ENCODE measurements at regions of chr4 and their contacts with region 1.

Region 1: DNA sequence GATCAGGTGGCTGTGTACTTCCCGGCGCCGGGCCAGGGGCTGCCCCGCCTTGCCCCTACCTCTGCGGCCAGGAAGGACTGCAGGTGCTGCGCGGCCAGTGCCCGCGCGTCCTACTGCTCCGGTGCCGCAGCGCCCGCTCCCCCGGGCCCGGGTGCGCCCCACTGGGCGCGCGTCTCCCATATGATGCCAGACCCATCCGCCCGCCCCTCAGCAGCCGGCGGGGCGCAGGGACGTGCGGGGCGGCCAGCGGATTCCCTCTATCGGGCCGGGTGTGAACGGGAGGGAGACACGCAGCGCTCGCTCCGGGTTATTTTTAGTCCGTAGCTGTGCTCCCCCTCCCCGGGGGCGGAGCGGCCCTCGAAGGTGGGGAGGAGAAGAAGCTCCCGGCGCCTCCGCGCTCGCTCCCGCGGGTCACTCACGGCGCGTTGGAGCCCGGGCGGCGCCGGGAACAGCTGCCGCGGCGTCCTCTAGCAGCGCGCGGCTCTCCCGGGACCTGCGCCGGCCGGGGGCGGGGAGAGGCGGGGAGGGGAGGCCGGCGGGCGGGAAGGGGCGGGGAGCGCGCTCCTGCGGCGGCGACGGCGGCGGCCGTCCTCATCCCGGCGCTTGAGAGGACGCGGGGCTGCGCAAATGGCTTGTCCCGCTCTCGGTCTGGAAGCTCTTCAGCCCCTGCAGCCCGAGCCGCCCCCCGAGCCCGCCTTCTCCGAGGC is 103.6 kb downstream of the UCHL1 start:
- DNase-seq: no peak
- H3K4me3 ChIP-seq: peak overlapping the region; percentile 72 to 76
- H3K27ac ChIP-seq: peak overlapping the region; percentile 63
- H3K4me1 ChIP-seq: peaks cover 31% of the 10 kb centered on the region
- H3K27me3 ChIP-seq: no peaks in the 10 kb centered on the region
- CTCF ChIP-seq: no peak
- POLR2A ChIP-seq: no peak

Region 2: DNA sequence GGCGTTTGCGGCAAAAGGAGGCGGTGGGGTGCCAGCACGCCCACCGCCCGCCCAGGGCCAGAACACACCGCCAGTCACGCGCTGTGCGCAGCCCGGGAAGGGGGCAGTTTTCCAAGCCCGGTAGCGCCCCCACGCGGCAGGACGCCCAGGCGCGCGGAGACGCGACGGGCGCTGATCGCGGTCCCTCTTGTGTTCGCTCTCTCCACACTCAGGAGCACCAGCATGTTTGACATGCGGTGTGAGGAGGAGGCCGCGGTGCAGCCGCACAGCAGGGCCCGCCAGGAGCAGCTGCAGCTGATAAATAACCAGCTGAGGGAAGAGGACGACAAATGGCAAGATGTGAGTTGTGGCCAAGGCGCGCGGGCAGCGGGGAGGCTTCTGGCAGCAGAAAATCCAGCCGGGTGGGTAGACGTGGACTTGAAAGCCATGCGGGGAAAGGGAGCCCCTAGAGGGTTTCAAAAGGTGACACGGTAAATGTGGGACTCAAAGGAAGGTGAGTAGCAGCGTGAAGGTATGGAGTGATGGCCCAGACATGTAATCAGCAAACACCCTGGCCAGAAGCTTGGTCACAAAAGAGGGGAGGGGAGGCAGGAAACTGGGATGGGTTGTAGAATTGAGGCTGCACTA is 284.0 kb after region 1 on chr4:
- intact Hi-C with region 1: loop called (anchors 5 kb)
- DNase-seq: no peak
- H3K4me3 ChIP-seq: peak overlapping the region in 1 of 2 donors; percentile 17
- H3K27ac ChIP-seq: no peak overlapping the region
- H3K4me1 ChIP-seq: no peaks in the 10 kb centered on the region
- H3K27me3 ChIP-seq: no peaks in the 10 kb centered on the region
- CTCF ChIP-seq: peak in 2 of 3 experiments; percentile 32 to 74
- POLR2A ChIP-seq: no peak